Psoas muscle (tissue), 8 donors: ENCODE measurements at regions of chr12 and their contacts with region 1.

Region 1: GRCh38 chr12:131642101-131642540 is 68.8 kb upstream of the SFSWAP start:
- DNase-seq: no peak
- ATAC-seq: no peak
- H3K4me3 ChIP-seq: no peak overlapping the region
- H3K27ac ChIP-seq: no peak overlapping the region
- H3K4me1 ChIP-seq: no peaks in the 10 kb centered on the region
- H3K27me3 ChIP-seq: peaks cover 0 to 15% (median 7%) of the 10 kb centered on the region in 3 donors
- CTCF ChIP-seq: no peak

Region 2: GRCh38 chr12:131311764-131312163 is 330.4 kb before region 1 on chr12:
- intact Hi-C with region 1: loop called (anchors 5 kb)
- DNase-seq: no peak
- ATAC-seq: no peak
- H3K4me3 ChIP-seq: no peak overlapping the region
- H3K27ac ChIP-seq: no peak overlapping the region
- H3K4me1 ChIP-seq: no peaks in the 10 kb centered on the region
- H3K27me3 ChIP-seq: peaks cover 0 to 11% (median 3%) of the 10 kb centered on the region in 3 donors
- CTCF ChIP-seq: no peak